Naive thymus-derived CD4-positive, alpha-beta T cell (primary cell): ENCODE measurements at regions of chr18 and their contacts with region 1.

Region 1: DNA sequence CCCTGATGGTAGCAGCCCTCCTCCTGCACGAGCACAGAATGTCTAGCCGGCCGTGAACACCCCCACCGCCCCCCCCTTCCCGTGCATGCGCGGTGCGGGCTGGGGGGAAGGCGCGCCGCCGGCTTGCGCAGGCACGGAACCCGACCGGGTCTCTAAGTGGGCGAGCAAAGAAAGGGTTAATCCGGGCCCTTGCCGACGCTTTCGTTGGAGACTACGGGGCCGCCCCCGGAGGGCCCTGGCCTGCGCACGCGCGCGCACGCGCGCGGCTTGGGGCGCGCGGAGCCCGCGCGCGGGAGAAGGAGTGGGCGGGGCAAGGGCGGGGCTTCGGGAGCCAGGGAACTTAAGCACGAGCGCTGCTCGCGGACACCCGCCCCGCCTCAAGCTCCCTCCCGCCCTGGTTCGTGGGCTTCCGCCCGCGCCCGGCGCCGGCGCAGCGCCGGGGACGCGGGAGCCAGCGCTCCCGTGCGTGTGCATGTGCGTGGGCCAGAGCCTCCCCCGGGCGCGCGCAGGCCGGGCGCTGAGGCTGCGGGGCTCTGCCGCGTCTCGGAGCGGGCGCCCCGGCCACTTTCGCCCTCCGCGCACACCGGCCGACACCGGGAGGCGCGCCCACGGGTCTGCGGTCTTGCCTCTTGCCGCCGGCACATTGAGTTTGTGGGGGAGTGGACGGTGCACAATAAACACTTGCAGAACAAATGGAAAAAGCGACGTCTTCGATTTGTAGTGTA is 617 bp upstream of the ZBTB14 start:
- DNase-seq: peak; percentile 90 to 96 (median 95)
- ATAC-seq: peak; percentile 80
- H3K4me3 ChIP-seq: peak overlapping the region; percentile 76
- H3K4me3 Mint-ChIP-seq: peak overlapping the region; percentile 87 to 98 (median 94)
- H3K27ac ChIP-seq: peak overlapping the region; percentile 87
- H3K27ac Mint-ChIP-seq: peak overlapping the region; percentile 86 to 99 (median 97)
- H3K4me1 ChIP-seq: peaks cover 24 to 37% of the 10 kb centered on the region in 2 donors
- H3K4me1 Mint-ChIP-seq: peaks cover 4 to 48% (median 42%) of the 10 kb centered on the region in 7 donors
- H3K27me3 ChIP-seq: no peaks in the 10 kb centered on the region
- H3K27me3 Mint-ChIP-seq: peaks cover 0 to 18% (median 1%) of the 10 kb centered on the region in 5 donors

Region 2: GRCh38 chr18:3447895-3448837 is 1848.0 kb before region 1 on chr18:
- CTCF ChIA-PET with region 1: no interaction called
- POLR2A ChIA-PET with region 1: interaction called, 6 read pairs
- intact Hi-C with region 1: loop called (anchors 2 kb)
- DNase-seq: peak; percentile 73 to 89 (median 84)
- ATAC-seq: peak; percentile 73
- H3K4me3 ChIP-seq: peak overlapping the region; percentile 78
- H3K4me3 Mint-ChIP-seq: peak overlapping the region; percentile 85 to 97 (median 96)
- H3K27ac ChIP-seq: peak overlapping the region; percentile 96
- H3K27ac Mint-ChIP-seq: peak overlapping the region; percentile 96 to 100 (median 99)
- H3K4me1 ChIP-seq: peaks cover 13% of the 10 kb centered on the region in 2 donors
- H3K4me1 Mint-ChIP-seq: peaks cover 5 to 35% (median 23%) of the 10 kb centered on the region in 7 donors
- H3K27me3 ChIP-seq: no peaks in the 10 kb centered on the region
- H3K27me3 Mint-ChIP-seq: peaks cover 0 to 1% (median 0%) of the 10 kb centered on the region in 5 donors

Region 3: GRCh38 chr18:5057386-5058348 is 238.5 kb before region 1 on chr18:
- CTCF ChIA-PET with region 1: no interaction called
- POLR2A ChIA-PET with region 1: interaction called, 11 read pairs
- intact Hi-C with region 1: no loop called
- DNase-seq: peak; percentile 17 to 54 (median 48)
- ATAC-seq: peak; percentile 56
- H3K4me3 ChIP-seq: no peak overlapping the region
- H3K4me3 Mint-ChIP-seq: peak overlapping the region in 1 of 10 donors; percentile 8
- H3K27ac ChIP-seq: no peak overlapping the region
- H3K27ac Mint-ChIP-seq: peak overlapping the region in 6 of 9 donors; percentile 14 to 89 (median 42)
- H3K4me1 ChIP-seq: peaks cover 11 to 18% of the 10 kb centered on the region in 2 donors
- H3K4me1 Mint-ChIP-seq: peaks cover 14 to 25% (median 21%) of the 10 kb centered on the region in 7 donors
- H3K27me3 ChIP-seq: no peaks in the 10 kb centered on the region
- H3K27me3 Mint-ChIP-seq: peaks cover 0 to 4% (median 2%) of the 10 kb centered on the region in 5 donors

Region 4: DNA sequence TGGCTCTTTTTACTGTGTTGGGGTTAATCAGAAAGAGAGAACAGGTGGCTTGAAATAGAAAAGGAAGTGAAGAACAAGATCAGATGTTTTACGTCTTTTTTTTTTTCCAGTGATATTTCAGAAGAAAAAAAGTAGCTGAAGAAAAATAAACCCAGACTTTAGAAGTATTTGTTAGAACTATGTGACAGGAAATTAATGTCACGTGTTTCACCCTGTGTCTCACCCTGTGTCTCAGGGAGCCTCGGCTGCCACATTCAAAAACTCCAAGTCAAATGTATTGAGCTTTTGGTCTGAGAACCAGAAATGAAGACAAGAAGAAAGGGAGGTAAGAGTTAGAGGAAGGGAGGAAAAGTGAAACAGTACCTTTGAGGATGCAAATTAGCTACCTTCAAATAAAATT is 137.1 kb before region 1 on chr18:
- CTCF ChIA-PET with region 1: interaction called, 3 read pairs
- POLR2A ChIA-PET with region 1: interaction called, 104 read pairs
- intact Hi-C with region 1: loop called in 1 of 2 experiments (anchors 1 kb)
- DNase-seq: peak in 7 of 9 donors; percentile 63 to 81 (median 76)
- ATAC-seq: peak; percentile 89
- H3K4me3 ChIP-seq: no peak overlapping the region
- H3K4me3 Mint-ChIP-seq: peak overlapping the region; percentile 11 to 92 (median 73)
- H3K27ac ChIP-seq: peak overlapping the region; percentile 53
- H3K27ac Mint-ChIP-seq: peak overlapping the region; percentile 43 to 97 (median 93)
- H3K4me1 ChIP-seq: peaks cover 0 to 45% of the 10 kb centered on the region in 2 donors
- H3K4me1 Mint-ChIP-seq: peaks cover 4 to 76% (median 61%) of the 10 kb centered on the region in 7 donors
- H3K27me3 ChIP-seq: no peaks in the 10 kb centered on the region
- H3K27me3 Mint-ChIP-seq: peaks cover 0 to 4% (median 0%) of the 10 kb centered on the region in 5 donors

Region 5: DNA sequence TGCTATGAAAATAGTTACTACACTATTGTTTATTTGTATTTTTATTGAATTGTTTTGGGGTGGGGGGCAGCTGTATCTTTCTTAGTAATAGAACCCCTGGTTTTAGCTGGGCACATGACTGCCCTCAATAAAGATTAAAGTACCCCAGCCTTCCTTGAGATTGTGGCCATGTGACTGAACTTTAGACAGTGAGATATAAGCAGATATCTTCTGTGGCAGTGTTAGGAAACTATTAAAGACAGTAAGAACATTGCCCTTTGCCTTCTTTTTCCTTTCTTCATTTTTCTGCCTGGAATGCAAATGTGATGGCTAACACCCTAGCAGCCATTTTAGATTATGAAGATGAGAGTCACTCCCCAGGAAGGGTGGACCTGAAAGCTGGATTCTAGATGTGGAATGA is 51.2 kb before region 1 on chr18:
- CTCF ChIA-PET with region 1: interaction called, 3 read pairs
- POLR2A ChIA-PET with region 1: interaction called, 267 read pairs
- intact Hi-C with region 1: no loop called
- DNase-seq: no peak
- ATAC-seq: no peak
- H3K4me3 ChIP-seq: no peak overlapping the region
- H3K4me3 Mint-ChIP-seq: no peak overlapping the region
- H3K27ac ChIP-seq: no peak overlapping the region
- H3K27ac Mint-ChIP-seq: peak overlapping the region in 2 of 9 donors; percentile 7 to 34
- H3K4me1 ChIP-seq: no peaks in the 10 kb centered on the region
- H3K4me1 Mint-ChIP-seq: peaks cover 11 to 36% (median 21%) of the 10 kb centered on the region in 7 donors
- H3K27me3 ChIP-seq: no peaks in the 10 kb centered on the region
- H3K27me3 Mint-ChIP-seq: no peaks in the 10 kb centered on the region

Region 6: DNA sequence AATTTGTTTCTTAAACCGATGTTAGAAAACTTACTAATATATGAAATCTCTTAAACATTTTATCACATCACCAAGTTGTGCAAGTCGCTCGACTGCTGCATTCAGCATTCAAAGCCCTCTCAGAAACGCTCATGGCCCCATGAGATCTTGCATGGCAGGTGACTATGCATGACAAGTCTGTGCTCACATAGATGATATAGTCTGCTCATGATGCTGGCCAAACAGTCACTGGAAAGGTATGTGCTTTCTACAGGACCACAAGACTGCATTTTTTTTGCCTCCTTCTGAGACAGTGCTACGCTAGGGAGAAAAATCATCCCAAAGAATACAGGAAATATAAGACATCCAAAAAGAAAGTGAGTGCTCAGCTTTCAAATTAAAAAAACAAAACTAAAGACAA is 97.6 kb after region 1 on chr18:
- CTCF ChIA-PET with region 1: no interaction called
- POLR2A ChIA-PET with region 1: interaction called, 4 read pairs
- intact Hi-C with region 1: loop called in 1 of 2 experiments (anchors 10 kb)
- DNase-seq: no peak
- ATAC-seq: no peak
- H3K4me3 ChIP-seq: no peak overlapping the region
- H3K4me3 Mint-ChIP-seq: no peak overlapping the region
- H3K27ac ChIP-seq: no peak overlapping the region
- H3K27ac Mint-ChIP-seq: no peak overlapping the region
- H3K4me1 ChIP-seq: peaks cover 0 to 7% of the 10 kb centered on the region in 2 donors
- H3K4me1 Mint-ChIP-seq: peaks cover 0 to 7% (median 0%) of the 10 kb centered on the region in 7 donors
- H3K27me3 ChIP-seq: no peaks in the 10 kb centered on the region
- H3K27me3 Mint-ChIP-seq: peaks cover 0 to 6% (median 2%) of the 10 kb centered on the region in 5 donors

Region 7: GRCh38 chr18:5546660-5547059 is 250.5 kb after region 1 on chr18:
- CTCF ChIA-PET with region 1: no interaction called
- POLR2A ChIA-PET with region 1: interaction called, 3 read pairs
- intact Hi-C with region 1: loop called in 1 of 2 experiments (anchors 5 kb)
- DNase-seq: peak in 3 of 9 donors; percentile 7 to 26 (median 16)
- ATAC-seq: peak; percentile 56
- H3K4me3 ChIP-seq: no peak overlapping the region
- H3K4me3 Mint-ChIP-seq: no peak overlapping the region
- H3K27ac ChIP-seq: no peak overlapping the region
- H3K27ac Mint-ChIP-seq: no peak overlapping the region
- H3K4me1 ChIP-seq: no peaks in the 10 kb centered on the region
- H3K4me1 Mint-ChIP-seq: peaks cover 3 to 15% (median 8%) of the 10 kb centered on the region in 7 donors
- H3K27me3 ChIP-seq: no peaks in the 10 kb centered on the region
- H3K27me3 Mint-ChIP-seq: peaks cover 34 to 50% (median 43%) of the 10 kb centered on the region in 5 donors